HEK293T (cell line): ENCODE measurements at regions of chr13 and their contacts with region 1.

Region 1: DNA sequence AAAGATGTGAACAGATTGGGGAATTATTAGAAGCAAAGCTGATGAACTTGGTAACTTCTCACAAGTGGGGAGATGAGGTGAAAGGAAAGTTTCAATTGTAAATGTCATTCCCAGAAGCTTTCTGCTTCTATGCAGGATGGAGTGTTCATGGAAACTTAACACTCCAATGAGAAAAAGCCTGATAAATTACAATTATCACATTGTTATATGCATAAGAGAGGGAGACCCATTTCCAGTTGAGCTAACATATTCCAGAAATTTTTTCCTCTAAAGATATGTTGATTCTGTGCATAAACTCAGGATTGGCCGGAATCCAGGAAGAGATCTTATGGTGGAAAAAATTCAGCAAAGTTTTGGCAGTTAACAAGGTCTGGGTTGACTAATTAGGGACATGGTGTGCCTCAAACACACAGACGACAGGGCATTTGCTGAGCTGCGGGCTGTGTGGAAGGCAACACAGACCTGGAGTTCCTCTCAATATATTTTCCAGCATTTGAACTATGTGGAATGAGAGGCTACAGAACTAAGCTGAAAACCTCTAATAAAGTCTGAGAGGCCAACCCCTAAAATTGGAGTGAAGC is 64.9 kb upstream of the FGF14 start:
- DNase-seq: no peak

Region 2: GRCh38 chr13:102170295-102170694 is 296.4 kb before region 1 on chr13:
- CTCF ChIA-PET with region 1: no interaction called
- POLR2A ChIA-PET with region 1: no interaction called
- DNase-seq: no peak

Region 3: DNA sequence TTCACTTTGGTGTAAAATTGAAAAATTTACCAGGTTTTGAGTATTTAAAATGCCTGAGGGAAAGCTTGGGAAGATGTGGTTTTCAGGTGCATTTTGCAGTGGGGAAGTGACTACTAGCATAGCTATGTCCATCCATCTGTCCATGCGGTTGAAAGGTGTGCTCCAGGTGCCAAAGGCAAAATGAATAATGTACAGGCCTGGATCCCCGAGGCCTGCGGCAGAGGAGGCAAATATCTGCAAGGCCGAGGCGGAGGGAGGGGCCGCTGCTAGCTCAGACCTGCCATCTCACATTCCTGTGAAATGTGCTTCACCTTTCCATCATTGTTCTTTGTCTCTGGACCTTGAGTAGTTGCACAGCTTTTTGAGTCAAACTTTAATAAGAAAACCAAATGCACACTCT is 444.6 kb after region 1 on chr13:
- CTCF ChIA-PET with region 1: interaction called, 10 read pairs
- POLR2A ChIA-PET with region 1: no interaction called
- DNase-seq: no peak